ENCODE measurements at regions of chr19 and their contacts with region 1.

Region 1: GRCh38 chr19:53917356-53917755 is 8.3 kb downstream of the CACNG7 start:
- DNase-seq: no peak
- H3K4me3 ChIP-seq: no peak overlapping the region
- CTCF ChIP-seq: no peak

Region 2: DNA sequence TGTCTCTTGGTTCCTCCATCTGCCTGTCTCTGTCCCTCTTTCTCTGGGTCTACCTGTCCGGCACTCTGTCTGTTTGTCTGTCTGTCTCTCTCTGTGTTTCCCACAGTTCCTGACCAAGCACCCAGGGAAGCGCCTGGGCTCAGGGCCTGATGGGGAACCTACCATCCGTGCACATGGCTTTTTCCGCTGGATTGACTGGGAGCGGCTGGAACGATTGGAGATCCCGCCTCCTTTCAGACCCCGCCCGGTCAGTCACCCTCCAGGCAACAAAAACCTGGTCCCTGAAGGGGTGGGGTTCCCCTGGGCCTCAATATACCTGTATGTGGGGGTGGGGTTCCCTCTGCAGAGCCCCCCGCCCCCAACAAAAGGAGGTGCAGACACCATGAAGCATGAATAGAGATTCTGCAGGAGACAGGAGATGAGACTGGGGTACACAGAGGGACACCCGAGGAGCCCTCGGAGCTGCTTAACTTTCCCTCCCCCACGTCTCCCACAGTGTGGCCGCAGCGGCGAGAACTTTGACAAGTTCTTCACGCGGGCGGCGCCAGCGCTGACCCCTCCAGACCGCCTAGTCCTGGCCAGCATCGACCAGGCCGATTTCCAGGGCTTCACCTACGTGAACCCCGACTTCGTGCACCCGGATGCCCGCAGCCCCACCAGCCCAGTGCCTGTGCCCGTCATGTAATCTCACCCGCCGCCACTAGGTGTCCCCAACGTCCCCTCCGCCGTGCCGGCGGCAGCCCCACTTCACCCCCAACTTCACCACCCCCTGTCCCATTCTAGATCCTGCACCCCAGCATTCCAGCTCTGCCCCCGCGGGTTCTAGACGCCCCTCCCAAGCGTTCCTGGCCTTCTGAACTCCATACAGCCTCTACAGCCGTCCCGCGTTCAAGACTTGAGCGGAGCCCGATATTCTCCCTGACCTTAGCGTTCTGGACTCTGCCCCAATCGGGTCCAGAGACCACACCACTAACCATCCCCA is 10.9 kb before region 1 on chr19:
- CTCF ChIA-PET with region 1: interaction called, 10 read pairs
- POLR2A ChIA-PET with region 1: no interaction called
- DNase-seq: no peak
- H3K4me3 ChIP-seq: no peak overlapping the region
- CTCF ChIP-seq: peak; percentile 88